Calu3 (cell line): ENCODE measurements at regions of chr9 and their contacts with region 1.

Region 1: GRCh38 chr9:73081979-73082657 is 69.5 kb upstream of the ANXA1 start:
- DNase-seq: peak; percentile 23
- H3K4me3 Mint-ChIP-seq: no peak overlapping the region
- H3K27ac Mint-ChIP-seq: no peak overlapping the region
- H3K4me1 Mint-ChIP-seq: peaks cover 26% of the 10 kb centered on the region
- H3K27me3 Mint-ChIP-seq: no peaks in the 10 kb centered on the region
- CTCF ChIP-seq: no peak

Region 2: GRCh38 chr9:72856972-72857623 is 225.0 kb before region 1 on chr9:
- CTCF ChIA-PET with region 1: interaction called, 5 read pairs
- intact Hi-C with region 1: loop called (anchors 5 kb)
- DNase-seq: peak; percentile 45
- H3K4me3 Mint-ChIP-seq: no peak overlapping the region
- H3K27ac Mint-ChIP-seq: no peak overlapping the region
- H3K4me1 Mint-ChIP-seq: peaks cover 23% of the 10 kb centered on the region
- H3K27me3 Mint-ChIP-seq: no peaks in the 10 kb centered on the region
- CTCF ChIP-seq: no peak

Region 3: DNA sequence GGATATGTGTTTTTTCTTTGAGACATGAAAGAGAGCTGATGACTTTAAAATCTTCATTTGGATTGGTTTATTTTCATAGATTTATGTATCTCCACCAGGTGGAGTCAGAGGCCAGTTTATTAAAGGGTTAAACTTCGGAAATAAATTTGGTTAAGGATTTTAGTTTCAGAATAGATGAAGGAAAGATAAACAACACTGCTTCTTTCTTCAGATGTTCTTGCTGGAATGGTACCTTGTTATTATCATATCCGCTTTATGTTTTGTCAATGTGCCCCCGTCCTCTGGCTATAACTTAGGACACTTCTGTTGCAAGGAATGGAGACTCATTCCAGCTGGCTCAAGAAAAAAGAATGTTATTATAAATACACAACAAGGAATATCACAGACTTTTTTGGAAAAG is 210.4 kb before region 1 on chr9:
- CTCF ChIA-PET with region 1: interaction called, 3 read pairs
- intact Hi-C with region 1: loop called (anchors 1 kb)
- DNase-seq: peak; percentile 1
- H3K4me3 Mint-ChIP-seq: no peak overlapping the region
- H3K27ac Mint-ChIP-seq: no peak overlapping the region
- H3K4me1 Mint-ChIP-seq: peaks cover 6% of the 10 kb centered on the region
- H3K27me3 Mint-ChIP-seq: no peaks in the 10 kb centered on the region
- CTCF ChIP-seq: peak; percentile 51

Region 4: DNA sequence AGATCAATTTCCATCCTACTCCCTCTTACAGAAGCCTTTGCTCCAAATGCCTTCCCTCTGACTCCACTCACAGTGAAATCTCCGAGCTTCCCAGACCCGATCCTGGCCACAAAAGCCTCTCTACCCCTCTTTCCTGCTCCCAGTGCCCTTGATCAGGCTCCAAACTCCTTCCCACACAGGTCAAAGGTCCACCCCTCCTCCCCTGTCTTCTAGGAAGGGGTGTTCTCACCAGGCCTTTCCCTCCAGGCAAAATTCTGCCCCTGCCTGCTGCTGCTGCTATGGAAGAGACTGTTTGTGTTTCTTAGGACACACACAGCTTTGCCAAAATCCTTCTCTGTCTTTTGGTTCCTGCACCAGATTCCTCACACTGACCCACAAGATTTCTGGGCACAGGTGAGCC is 43.5 kb before region 1 on chr9:
- CTCF ChIA-PET with region 1: interaction called, 3 read pairs
- intact Hi-C with region 1: loop called (anchors 1 kb)
- DNase-seq: peak; percentile 2
- H3K4me3 Mint-ChIP-seq: peak overlapping the region; percentile 41
- H3K27ac Mint-ChIP-seq: peak overlapping the region; percentile 70
- H3K4me1 Mint-ChIP-seq: peaks cover 14% of the 10 kb centered on the region
- H3K27me3 Mint-ChIP-seq: no peaks in the 10 kb centered on the region
- CTCF ChIP-seq: no peak